A549 (cell line): ENCODE measurements at regions of chr16 and their contacts with region 1.

Region 1: GRCh38 chr16:1054660-1055556 is 17.6 kb upstream of the SSTR5 start:
- DNase-seq: peak; percentile 57 to 77
- ATAC-seq: peak; percentile 74 to 88
- H3K4me3 ChIP-seq: no peak overlapping the region
- H3K27ac ChIP-seq: no peak overlapping the region
- H3K4me1 ChIP-seq: peaks cover 13% of the 10 kb centered on the region
- CTCF ChIP-seq: peak; percentile 83
- EP300 ChIP-seq: no peak
- POLR2A ChIP-seq: no peak
- RAD21 ChIP-seq: peak; percentile 90 to 97

Region 2: GRCh38 chr16:648781-649589 is 405.9 kb before region 1 on chr16 and contains the start of gene WDR90:
- CTCF ChIA-PET with region 1: no interaction called
- POLR2A ChIA-PET with region 1: no interaction called
- DNase-seq: peak; percentile 94
- ATAC-seq: peak; percentile 70 to 85
- H3K4me3 ChIP-seq: peak within 1 kb of the TSS; percentile 79
- H3K27ac ChIP-seq: peak within 1 kb of the TSS; percentile 90 to 99
- H3K4me1 ChIP-seq: peaks cover 43% of the 10 kb centered on the region
- CTCF ChIP-seq: no peak
- EP300 ChIP-seq: no peak
- POLR2A ChIP-seq: peak; percentile 57
- RAD21 ChIP-seq: no peak
- polyA plus RNA-seq, gene WDR90: 6.5 and 7.3 TPM in 2 replicates

Region 3: DNA sequence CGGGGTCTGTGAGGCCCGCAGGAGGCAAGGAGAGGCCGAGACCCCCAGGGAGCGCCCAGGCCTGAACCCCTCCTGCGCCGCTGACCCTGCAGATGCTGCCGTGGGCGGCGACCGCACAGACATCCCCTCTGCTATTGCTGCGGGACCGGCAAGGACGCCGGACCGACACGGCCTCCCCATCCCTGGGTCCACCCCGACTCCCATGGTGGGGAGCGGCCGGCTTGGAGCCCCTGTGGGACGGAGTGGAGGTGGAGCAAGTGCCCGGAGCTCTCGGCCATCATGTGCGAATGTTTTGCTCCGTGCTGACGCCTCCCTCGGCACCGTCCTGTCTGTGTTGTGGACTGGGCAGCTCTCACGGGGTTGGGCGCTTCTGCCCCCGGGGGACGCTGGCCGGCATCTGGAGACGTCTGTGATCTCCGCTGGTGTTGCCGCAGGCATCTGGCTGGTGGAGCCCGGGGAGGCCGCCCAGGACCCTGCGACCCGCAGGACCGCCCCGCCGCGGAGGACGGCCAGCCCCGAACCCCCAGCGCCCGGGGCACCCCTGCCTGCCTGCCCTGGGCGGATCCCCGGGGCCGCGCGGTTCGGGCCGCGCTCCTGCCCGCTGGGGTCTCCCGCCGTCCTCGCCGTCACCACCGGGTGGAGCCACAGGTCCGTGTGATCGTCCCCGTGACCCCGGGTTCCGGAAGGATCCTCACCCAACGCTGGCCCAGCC is 241.5 kb before region 1 on chr16:
- CTCF ChIA-PET with region 1: interaction called, 91 read pairs
- POLR2A ChIA-PET with region 1: no interaction called
- DNase-seq: peak in 1 of 2 experiments; percentile 63
- ATAC-seq: peak; percentile 76 to 88
- H3K4me3 ChIP-seq: peak overlapping the region; percentile 43
- H3K27ac ChIP-seq: peak overlapping the region; percentile 57 to 80; a peak in 5 of 6 replicates
- H3K4me1 ChIP-seq: peaks cover 14% of the 10 kb centered on the region; the same call in 2 of the 3 replicates
- CTCF ChIP-seq: peak; percentile 82
- EP300 ChIP-seq: no peak
- POLR2A ChIP-seq: no peak
- RAD21 ChIP-seq: peak; percentile 88 to 95

Region 4: GRCh38 chr16:938136-938795 is 116.6 kb before region 1 on chr16:
- CTCF ChIA-PET with region 1: interaction called, 11 read pairs
- POLR2A ChIA-PET with region 1: no interaction called
- DNase-seq: no peak
- ATAC-seq: no peak
- H3K4me3 ChIP-seq: no peak overlapping the region
- H3K27ac ChIP-seq: no peak overlapping the region
- H3K4me1 ChIP-seq: no peaks in the 10 kb centered on the region
- CTCF ChIP-seq: no peak
- EP300 ChIP-seq: no peak
- POLR2A ChIP-seq: no peak
- RAD21 ChIP-seq: no peak

Region 5: GRCh38 chr16:995087-995486 is 59.8 kb before region 1 on chr16:
- CTCF ChIA-PET with region 1: interaction called, 15 read pairs
- POLR2A ChIA-PET with region 1: no interaction called
- DNase-seq: no peak
- ATAC-seq: no peak
- H3K4me3 ChIP-seq: no peak overlapping the region
- H3K27ac ChIP-seq: no peak overlapping the region
- H3K4me1 ChIP-seq: peaks cover 12% of the 10 kb centered on the region
- CTCF ChIP-seq: no peak
- EP300 ChIP-seq: no peak
- POLR2A ChIP-seq: no peak
- RAD21 ChIP-seq: no peak

Region 6: DNA sequence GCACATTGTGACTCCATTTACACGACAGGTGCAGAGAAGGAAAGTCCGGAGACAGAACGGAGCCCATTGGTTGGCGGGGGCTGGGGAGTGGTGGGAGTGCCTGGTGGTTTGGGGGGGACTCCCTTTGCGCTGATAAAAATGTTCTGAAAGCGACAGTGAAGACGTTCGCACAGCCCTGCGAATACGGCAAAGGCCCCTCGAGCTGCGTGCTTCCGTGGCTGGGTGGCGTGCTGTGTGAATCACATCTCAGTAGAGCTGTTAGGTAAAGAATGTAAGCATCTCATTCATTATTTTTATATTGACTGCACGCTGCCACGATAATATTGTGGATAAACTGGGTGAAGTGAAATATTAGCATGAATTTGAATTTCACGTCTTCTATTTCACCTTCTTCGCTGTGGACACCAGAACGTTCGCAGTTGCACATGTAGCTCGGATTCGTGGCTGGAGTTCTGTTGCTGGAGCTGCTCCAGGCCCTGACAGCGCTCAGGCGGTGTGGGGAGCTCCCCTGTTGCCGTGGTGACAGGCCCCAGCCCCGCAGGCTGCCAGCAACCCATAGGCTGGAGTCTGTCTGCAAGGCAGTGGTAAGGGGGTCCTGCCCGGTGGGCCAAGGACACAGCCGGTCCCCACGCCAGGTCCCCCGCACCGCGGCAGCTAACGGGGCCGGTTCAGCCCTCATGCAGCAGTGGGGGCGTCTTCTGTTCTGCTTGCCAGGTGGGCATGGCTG is 28.7 kb before region 1 on chr16:
- CTCF ChIA-PET with region 1: interaction called, 22 read pairs
- POLR2A ChIA-PET with region 1: no interaction called
- DNase-seq: no peak
- ATAC-seq: no peak
- H3K4me3 ChIP-seq: no peak overlapping the region
- H3K27ac ChIP-seq: no peak overlapping the region
- H3K4me1 ChIP-seq: no peaks in the 10 kb centered on the region
- CTCF ChIP-seq: no peak
- EP300 ChIP-seq: no peak
- POLR2A ChIP-seq: no peak
- RAD21 ChIP-seq: no peak

Region 7: DNA sequence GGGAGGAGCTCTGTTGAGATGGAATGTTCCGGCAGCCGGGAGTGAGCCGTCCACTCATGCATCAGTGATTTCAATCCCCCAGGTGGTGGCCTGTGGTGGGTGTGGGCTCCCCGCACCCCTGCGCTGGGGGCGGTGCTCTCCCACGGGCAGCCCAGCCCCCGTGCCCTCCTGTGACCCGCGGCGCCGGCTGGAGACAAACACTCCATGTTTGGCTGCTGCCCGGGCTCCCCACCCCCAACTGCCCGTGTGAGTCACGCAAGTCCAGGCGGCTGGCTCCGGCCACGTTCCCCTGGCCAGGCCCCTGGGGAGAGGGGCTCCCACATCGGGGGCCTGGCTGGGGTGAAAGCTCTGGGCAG is 127.4 kb after region 1 on chr16:
- CTCF ChIA-PET with region 1: interaction called, 11 read pairs
- POLR2A ChIA-PET with region 1: no interaction called
- DNase-seq: peak; percentile 57 to 83
- ATAC-seq: peak; percentile 58 to 79
- H3K4me3 ChIP-seq: peak overlapping the region; percentile 36; the same call in 2 of the 3 replicates
- H3K27ac ChIP-seq: peak overlapping the region; percentile 97 to 100
- H3K4me1 ChIP-seq: peaks cover 49% of the 10 kb centered on the region
- CTCF ChIP-seq: no peak
- EP300 ChIP-seq: peak; percentile 13 to 33; a peak in 2 of 5 replicates
- POLR2A ChIP-seq: no peak
- RAD21 ChIP-seq: peak in 1 of 2 experiments; percentile 21; a peak in 1 of 5 replicates